Kidney (tissue), 22 donors: ENCODE measurements at regions of chr17 and their contacts with region 1.

Region 1: GRCh38 chr17:40909351-40909750 is 24.3 kb upstream of the KRT20 start:
- DNase-seq: peak; percentile 69 to 93 (median 80)
- H3K4me3 ChIP-seq: no peak overlapping the region
- H3K27ac ChIP-seq: no peak overlapping the region
- H3K4me1 ChIP-seq: no peaks in the 10 kb centered on the region
- H3K27me3 ChIP-seq: no peaks in the 10 kb centered on the region
- CTCF ChIP-seq: peak; percentile 62

Region 2: DNA sequence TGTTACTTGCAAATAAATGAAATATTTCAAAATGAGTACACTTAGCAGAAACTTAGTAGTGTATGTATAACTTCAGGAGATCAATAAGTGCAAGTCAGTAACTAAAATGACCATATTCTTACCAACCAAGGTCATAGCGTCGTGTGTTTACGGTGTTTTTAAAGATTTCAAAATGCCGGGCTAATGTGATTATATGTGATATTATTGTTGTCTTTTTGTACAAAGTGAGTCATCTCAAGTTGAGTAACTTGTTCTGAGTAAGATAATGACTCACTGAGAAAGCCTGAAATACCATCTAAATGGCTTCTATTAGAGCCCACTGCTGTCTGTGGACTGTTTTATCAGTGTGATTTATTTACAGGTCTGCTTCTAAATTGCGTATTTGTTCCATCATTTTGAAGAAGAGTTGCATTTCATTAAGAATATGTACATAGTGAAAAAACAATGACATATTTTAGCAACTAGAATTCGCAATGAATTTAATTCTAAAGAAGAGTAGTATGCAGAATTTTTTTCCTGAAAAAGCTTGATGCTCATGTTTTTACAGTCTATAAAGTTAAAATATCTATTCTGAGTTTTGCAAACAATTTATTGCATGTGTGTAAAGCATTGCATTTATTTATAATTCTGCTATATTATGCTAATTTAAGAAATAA is 55.1 kb before region 1 on chr17:
- intact Hi-C with region 1: no loop called
- DNase-seq: no peak
- H3K4me3 ChIP-seq: no peak overlapping the region
- H3K27ac ChIP-seq: no peak overlapping the region
- H3K4me1 ChIP-seq: no peaks in the 10 kb centered on the region
- H3K27me3 ChIP-seq: no peaks in the 10 kb centered on the region
- CTCF ChIP-seq: no peak

Region 3: DNA sequence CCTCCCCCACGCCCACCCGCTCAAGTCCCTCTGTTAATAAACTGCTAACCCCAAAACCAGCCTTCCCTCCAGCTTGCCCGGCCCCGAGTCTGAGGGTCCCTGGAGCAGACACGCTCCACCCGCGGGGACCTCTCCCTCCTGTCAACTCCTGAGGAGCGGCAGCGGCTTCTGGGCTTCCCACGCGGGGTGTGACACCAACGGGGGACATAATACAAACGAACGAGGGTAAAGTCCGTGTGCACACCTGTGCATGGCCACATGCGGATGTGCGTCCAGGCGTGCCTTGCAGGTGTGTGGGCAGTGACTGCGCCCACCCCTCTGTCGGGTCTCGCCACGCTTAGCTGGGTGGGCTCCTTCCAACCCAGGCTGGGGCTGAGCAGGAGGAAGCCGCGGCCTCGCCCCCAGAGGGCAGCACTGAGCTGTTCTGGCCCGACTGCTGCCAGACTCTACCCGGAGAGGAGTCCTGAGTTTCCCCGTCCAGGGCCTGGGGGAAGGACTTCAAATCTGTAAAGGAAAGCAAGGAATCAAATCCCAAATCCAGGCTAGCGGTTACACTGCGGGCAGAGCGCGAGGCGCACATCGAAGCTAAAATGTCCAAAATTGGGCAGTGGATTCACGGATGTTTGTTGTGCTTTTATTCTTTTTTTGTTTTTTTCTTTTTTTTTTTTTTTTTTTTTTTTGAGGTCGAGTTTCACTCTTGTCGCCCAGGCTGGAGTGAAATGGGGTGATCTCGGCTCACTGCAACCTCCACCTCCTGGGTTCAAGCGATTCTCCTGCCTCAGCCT is 739.3 kb after region 1 on chr17:
- intact Hi-C with region 1: loop called (anchors 10 kb)
- DNase-seq: peak; percentile 93 to 94 (median 94)
- H3K4me3 ChIP-seq: peak overlapping the region in 2 of 3 donors; percentile 36 to 53
- H3K27ac ChIP-seq: peak overlapping the region; percentile 9 to 28
- H3K4me1 ChIP-seq: peaks cover 6 to 30% (median 19%) of the 10 kb centered on the region in 3 donors
- H3K27me3 ChIP-seq: no peaks in the 10 kb centered on the region
- CTCF ChIP-seq: peak; percentile 87